GM18951 (cell line): ENCODE measurements at regions of chr10 and their contacts with region 1.

Region 1: GRCh38 chr10:117461766-117462423 is 80.7 kb upstream of the EMX2 start:
- POLR2A ChIP-seq: no peak

Region 2: GRCh38 chr10:115696747-115697146 is 1765.1 kb before region 1 on chr10:
- in situ Hi-C with region 1: no loop called
- POLR2A ChIP-seq: no peak

Region 3: GRCh38 chr10:117216611-117217195 is 245.2 kb before region 1 on chr10:
- in situ Hi-C with region 1: loop called (anchors 25 kb)
- POLR2A ChIP-seq: no peak

Region 4: GRCh38 chr10:117684672-117685271 is 222.9 kb after region 1 on chr10:
- in situ Hi-C with region 1: no loop called
- POLR2A ChIP-seq: no peak